ENCODE measurements at regions of chr11 and their contacts with region 1.

Region 1: GRCh38 chr11:72831513-72832300 is 17.5 kb downstream of the ATG16L2 start:
- DNase-seq: peak; percentile 72 to 84
- ATAC-seq: peak; percentile 89

Region 2: GRCh38 chr11:73034777-73035176 is 203.1 kb after region 1 on chr11:
- intact Hi-C with region 1: no loop called
- DNase-seq: no peak
- ATAC-seq: peak; percentile 78

Region 3: DNA sequence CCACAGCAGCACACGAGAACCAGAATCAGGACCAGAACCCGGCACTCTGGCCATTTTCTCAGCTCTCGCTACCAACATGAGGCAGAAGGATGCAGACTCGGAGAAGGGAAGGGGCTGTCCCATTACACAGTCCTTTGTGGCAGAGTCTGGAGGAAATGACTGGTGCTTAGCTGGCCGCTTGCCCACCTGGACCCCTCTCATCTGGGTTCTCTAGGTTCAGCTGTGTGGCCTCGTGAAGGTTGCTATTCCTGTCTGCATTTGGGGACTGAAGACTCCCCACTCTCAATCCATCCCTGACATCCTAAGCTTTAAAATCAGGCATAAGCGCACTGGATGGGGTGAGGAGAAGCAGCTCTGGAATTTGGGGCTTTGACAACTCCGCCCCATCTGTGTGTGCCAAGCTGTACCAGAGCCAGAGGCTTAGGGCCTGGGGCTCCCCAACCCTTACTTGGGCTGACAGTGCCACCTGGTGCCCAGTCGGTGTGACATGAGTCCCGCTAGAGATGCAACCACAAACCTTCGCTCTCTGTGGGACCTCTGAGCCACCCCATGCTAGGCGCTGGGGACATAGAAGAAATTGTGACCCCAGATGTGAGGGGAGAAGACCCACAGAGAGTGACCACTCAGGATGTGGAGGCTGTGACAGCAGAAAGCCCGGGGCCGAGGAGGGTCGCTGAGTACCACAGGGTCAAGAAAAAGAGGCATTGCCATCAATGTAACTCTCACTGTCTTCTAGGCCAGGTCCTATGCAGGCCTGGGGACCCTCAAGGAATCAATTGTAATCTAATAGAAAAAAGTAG is 346.3 kb after region 1 on chr11:
- intact Hi-C with region 1: loop called (anchors 2 to 10 kb)
- DNase-seq: peak; percentile 75 to 87
- ATAC-seq: peak; percentile 67